Mammary epithelial cell (primary cell): ENCODE measurements at regions of chr2 and their contacts with region 1.

Region 1: GRCh38 chr2:170271340-170271739 is 93.4 kb downstream of the MYO3B start:
- DNase-seq: no peak
- H3K4me3 ChIP-seq: no peak overlapping the region
- H3K27ac ChIP-seq: no peak overlapping the region
- H3K4me1 ChIP-seq: no peaks in the 10 kb centered on the region
- H3K27me3 ChIP-seq: no peaks in the 10 kb centered on the region
- CTCF ChIP-seq: no peak

Region 2: GRCh38 chr2:170314744-170315447 is 43.6 kb after region 1 on chr2:
- CTCF ChIA-PET with region 1: no interaction called
- dilution Hi-C with region 1: no loop called
- in situ Hi-C with region 1: no loop called
- intact Hi-C with region 1: no loop called
- DNase-seq: peak; percentile 52
- H3K4me3 ChIP-seq: no peak overlapping the region
- H3K27ac ChIP-seq: no peak overlapping the region
- H3K4me1 ChIP-seq: no peaks in the 10 kb centered on the region
- H3K27me3 ChIP-seq: no peaks in the 10 kb centered on the region
- CTCF ChIP-seq: no peak

Region 3: GRCh38 chr2:170339750-170340692 is 68.7 kb after region 1 on chr2:
- CTCF ChIA-PET with region 1: no interaction called
- dilution Hi-C with region 1: loop called (anchors 10 kb)
- in situ Hi-C with region 1: no loop called
- intact Hi-C with region 1: no loop called
- DNase-seq: no peak
- H3K4me3 ChIP-seq: no peak overlapping the region
- H3K27ac ChIP-seq: no peak overlapping the region
- H3K4me1 ChIP-seq: no peaks in the 10 kb centered on the region
- H3K27me3 ChIP-seq: peaks cover 2% of the 10 kb centered on the region
- CTCF ChIP-seq: no peak